Heart left ventricle (tissue), 16 donors: ENCODE measurements at regions of chr15 and their contacts with region 1.

Region 1: GRCh38 chr15:56683908-56684307 is 49.4 kb downstream of the ZNF280D start:
- DNase-seq: no peak
- ATAC-seq: no peak
- H3K4me3 ChIP-seq: no peak overlapping the region
- H3K27ac ChIP-seq: no peak overlapping the region
- H3K4me1 ChIP-seq: peaks cover 0 to 19% (median 6%) of the 10 kb centered on the region in 12 donors
- H3K27me3 ChIP-seq: no peaks in the 10 kb centered on the region
- CTCF ChIP-seq: no peak
- POLR2A ChIP-seq: no peak

Region 2: GRCh38 chr15:56537881-56538280 is 146.0 kb before region 1 on chr15:
- intact Hi-C with region 1: no loop called
- DNase-seq: peak in 1 of 5 donors; percentile 65
- ATAC-seq: no peak
- H3K4me3 ChIP-seq: no peak overlapping the region
- H3K27ac ChIP-seq: no peak overlapping the region
- H3K4me1 ChIP-seq: no peaks in the 10 kb centered on the region
- H3K27me3 ChIP-seq: no peaks in the 10 kb centered on the region
- CTCF ChIP-seq: no peak
- POLR2A ChIP-seq: no peak

Region 3: GRCh38 chr15:56772868-56773639 is 89.1 kb after region 1 on chr15:
- intact Hi-C with region 1: loop called in 1 of 10 experiments (anchors 10 kb)
- DNase-seq: no peak
- ATAC-seq: no peak
- H3K4me3 ChIP-seq: no peak overlapping the region
- H3K27ac ChIP-seq: no peak overlapping the region
- H3K4me1 ChIP-seq: peaks cover 0 to 25% (median 0%) of the 10 kb centered on the region in 12 donors
- H3K27me3 ChIP-seq: no peaks in the 10 kb centered on the region
- CTCF ChIP-seq: no peak
- POLR2A ChIP-seq: no peak